ENCODE measurements at regions of chr7 and their contacts with region 1.

Region 1: GRCh38 chr7:122092964-122093797 is 50.9 kb downstream of the AASS start:
- DNase-seq: peak in 4 of 5 donors; percentile 22 to 34 (median 28)
- H3K4me3 ChIP-seq: no peak overlapping the region
- H3K4me3 Mint-ChIP-seq: no peak overlapping the region
- H3K27ac ChIP-seq: no peak overlapping the region
- H3K27ac Mint-ChIP-seq: peak overlapping the region in 1 of 7 donors; percentile 22
- H3K4me1 ChIP-seq: no peaks in the 10 kb centered on the region
- H3K4me1 Mint-ChIP-seq: no peaks in the 10 kb centered on the region
- H3K27me3 ChIP-seq: no peaks in the 10 kb centered on the region
- H3K27me3 Mint-ChIP-seq: no peaks in the 10 kb centered on the region

Region 2: GRCh38 chr7:122528879-122529481 is 435.8 kb after region 1 on chr7:
- CTCF ChIA-PET with region 1: interaction called, 3 read pairs
- POLR2A ChIA-PET with region 1: no interaction called
- intact Hi-C with region 1: loop called (anchors 5 kb)
- DNase-seq: no peak
- H3K4me3 ChIP-seq: no peak overlapping the region
- H3K4me3 Mint-ChIP-seq: no peak overlapping the region
- H3K27ac ChIP-seq: no peak overlapping the region
- H3K27ac Mint-ChIP-seq: no peak overlapping the region
- H3K4me1 ChIP-seq: no peaks in the 10 kb centered on the region
- H3K4me1 Mint-ChIP-seq: no peaks in the 10 kb centered on the region
- H3K27me3 ChIP-seq: no peaks in the 10 kb centered on the region
- H3K27me3 Mint-ChIP-seq: no peaks in the 10 kb centered on the region

Region 3: GRCh38 chr7:123154231-123154860 is 1061.2 kb after region 1 on chr7:
- CTCF ChIA-PET with region 1: no interaction called
- POLR2A ChIA-PET with region 1: no interaction called
- intact Hi-C with region 1: loop called (anchors 5 kb)
- DNase-seq: peak in 2 of 5 donors; percentile 1 to 4
- H3K4me3 ChIP-seq: no peak overlapping the region
- H3K4me3 Mint-ChIP-seq: no peak overlapping the region
- H3K27ac ChIP-seq: no peak overlapping the region
- H3K27ac Mint-ChIP-seq: no peak overlapping the region
- H3K4me1 ChIP-seq: no peaks in the 10 kb centered on the region
- H3K4me1 Mint-ChIP-seq: peaks cover 0 to 4% (median 0%) of the 10 kb centered on the region in 4 donors
- H3K27me3 ChIP-seq: no peaks in the 10 kb centered on the region
- H3K27me3 Mint-ChIP-seq: no peaks in the 10 kb centered on the region

Measured in CD4-positive, alpha-beta memory T cell (primary cell).